ENCODE measurements at regions of chr1 and their contacts with region 1.

Region 1: DNA sequence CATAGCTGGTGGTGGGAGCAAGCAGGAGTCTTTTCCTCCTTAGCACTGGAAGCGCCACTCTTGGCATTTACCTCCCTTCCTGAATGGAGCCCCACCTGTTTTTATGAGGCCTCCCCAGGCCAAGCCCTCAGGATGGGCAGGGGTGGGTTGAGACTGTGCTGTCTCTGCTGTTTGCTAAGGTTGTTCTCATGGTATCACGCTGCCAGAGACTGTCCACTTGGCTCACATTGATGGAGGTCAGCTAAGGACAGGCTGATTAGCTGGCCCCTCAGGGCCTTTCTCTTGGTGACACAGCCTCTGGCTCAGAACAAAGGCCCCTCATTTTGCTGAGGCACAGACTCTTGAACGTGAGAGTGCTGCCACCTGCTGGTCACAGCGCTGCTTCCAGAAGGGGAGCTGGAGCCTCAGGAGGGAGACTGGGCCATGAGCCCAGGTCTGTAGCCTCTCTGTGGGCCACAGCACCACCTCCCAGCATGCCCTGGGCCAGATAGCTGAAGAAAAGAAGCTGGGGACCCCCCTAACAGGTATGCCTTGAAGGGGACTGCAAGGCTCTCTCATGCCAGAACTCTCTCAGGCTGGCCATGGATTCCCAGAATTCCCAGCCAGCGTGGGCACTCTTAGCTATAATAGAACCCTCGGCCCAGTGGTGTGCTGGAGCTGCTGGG is 85.6 kb downstream of the CD58 start:
- DNase-seq: peak; percentile 85
- H3K4me3 ChIP-seq: peak overlapping the region in 1 of 2 experiments; percentile 33; a peak in 1 of 4 replicates
- H3K27ac ChIP-seq: peak overlapping the region in 1 of 2 experiments; percentile 58; a peak in 2 of 4 replicates
- H3K4me1 ChIP-seq: peaks cover 15 to 48% of the 10 kb centered on the region in 2 experiments; a peak in 3 of 4 replicates
- H3K27me3 ChIP-seq: no peaks in the 10 kb centered on the region
- CTCF ChIP-seq: peak; percentile 92
- EP300 ChIP-seq: no peak
- RAD21 ChIP-seq: peak; percentile 96

Region 2: DNA sequence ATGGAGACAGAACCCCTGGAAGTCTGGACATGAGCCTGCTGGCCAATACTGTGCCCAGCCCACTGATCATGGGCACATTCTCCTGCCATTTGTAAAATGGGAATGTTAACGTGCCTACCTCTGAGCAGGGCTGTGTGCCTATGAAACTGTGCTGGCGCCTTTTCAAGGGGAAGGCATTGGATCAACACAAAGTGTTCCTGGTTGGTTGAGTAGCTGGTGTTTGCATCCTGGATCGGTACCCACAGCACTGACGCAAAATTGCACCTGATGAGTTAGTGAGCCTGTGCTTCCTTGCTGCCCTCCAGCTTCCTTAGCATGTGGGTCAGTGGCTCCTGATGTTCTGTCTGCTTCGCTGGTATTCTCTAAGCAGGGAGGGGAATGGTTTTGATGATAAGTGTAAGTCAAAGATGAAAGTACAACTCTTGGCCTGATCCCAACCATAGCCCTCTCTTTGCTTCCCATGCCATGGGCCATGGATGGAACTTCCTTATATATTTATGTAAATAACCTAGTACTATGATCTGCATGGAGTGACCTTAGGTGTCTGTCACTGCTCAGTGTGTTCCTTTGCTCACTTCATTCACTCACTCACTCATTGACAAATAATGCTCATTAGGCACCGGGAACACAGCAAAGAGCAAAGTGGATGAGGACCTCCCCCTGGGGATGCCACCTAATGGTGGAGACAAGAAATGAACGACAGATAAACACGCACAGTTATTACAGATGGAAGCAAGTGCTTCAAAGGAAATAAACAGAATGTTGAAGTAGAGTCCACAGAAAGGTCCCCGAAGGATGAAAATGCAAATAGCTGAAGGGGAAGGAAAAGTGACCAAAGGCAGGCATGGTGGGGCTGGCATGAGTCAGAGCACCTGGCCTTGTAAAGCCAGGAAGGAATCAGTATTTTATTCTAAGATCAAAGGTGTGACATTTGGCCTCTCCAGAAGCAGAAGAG is 351.2 kb before region 1 on chr1:
- CTCF ChIA-PET with region 1: interaction called, 1,099 read pairs
- POLR2A ChIA-PET with region 1: interaction called, 29 read pairs
- DNase-seq: no peak
- H3K4me3 ChIP-seq: no peak overlapping the region
- H3K27ac ChIP-seq: no peak overlapping the region
- H3K4me1 ChIP-seq: no peaks in the 10 kb centered on the region
- H3K27me3 ChIP-seq: peaks cover 4% of the 10 kb centered on the region; the same call in 1 of the 2 replicates
- CTCF ChIP-seq: no peak
- EP300 ChIP-seq: no peak
- RAD21 ChIP-seq: no peak

Region 3: DNA sequence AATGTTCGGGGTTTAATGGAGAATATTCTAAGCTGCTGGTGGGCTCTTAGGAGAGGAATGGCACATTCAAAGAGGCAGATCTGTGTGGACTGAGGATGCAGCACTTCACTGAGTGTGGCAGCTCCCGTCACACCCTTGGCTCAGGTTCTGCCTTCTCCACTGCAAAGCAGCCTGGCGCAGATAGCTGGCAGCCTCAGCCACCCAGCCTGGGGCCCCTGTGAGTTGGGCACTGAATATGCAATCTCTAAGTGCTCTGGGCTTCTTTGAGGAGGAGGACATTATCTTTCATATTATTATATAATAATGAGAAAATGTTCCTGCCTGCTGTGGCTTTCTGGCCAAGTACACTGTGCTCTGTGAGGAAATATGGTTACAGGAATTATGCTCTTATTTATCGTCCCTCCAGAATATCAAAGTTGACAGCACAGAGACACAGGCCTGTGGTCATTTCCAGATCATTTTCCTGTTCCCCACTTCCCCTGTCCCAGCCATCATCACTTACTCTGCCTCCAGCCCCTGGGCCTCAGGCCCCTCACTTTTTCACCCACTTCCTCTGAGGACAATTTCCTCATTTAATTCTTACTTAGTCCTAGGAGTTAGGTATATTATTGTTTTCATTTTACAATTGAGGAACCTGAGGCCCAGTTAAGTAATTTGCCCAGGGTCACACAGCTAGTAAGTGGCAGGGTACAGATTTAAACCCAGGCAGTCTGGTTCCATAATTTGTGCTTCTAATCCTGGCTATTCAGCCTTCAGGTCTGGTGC is 320.4 kb before region 1 on chr1:
- CTCF ChIA-PET with region 1: interaction called, 16 read pairs
- POLR2A ChIA-PET with region 1: no interaction called
- DNase-seq: peak; percentile 55
- H3K4me3 ChIP-seq: no peak overlapping the region
- H3K27ac ChIP-seq: peak overlapping the region in 1 of 2 experiments; percentile 69; a peak in 2 of 4 replicates
- H3K4me1 ChIP-seq: peaks cover 0 to 26% of the 10 kb centered on the region in 2 experiments; a peak in 1 of 4 replicates
- H3K27me3 ChIP-seq: no peaks in the 10 kb centered on the region
- CTCF ChIP-seq: no peak
- EP300 ChIP-seq: no peak
- RAD21 ChIP-seq: no peak

Region 4: DNA sequence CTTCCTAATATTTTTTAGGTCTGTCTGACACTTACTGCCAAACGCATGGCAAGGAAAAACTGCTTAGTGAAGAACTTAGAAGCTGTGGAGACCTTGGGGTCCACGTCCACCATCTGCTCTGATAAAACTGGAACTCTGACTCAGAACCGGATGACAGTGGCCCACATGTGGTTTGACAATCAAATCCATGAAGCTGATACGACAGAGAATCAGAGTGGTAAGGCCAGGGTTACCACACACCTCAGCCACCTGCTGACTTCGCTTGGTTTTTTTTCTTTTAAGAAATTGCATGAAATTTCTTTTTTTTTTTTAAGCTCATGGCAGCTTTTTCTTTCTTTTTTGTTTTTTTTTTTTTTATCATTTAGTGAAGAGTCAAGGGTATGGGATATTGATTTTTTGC is 95.0 kb before region 1 on chr1:
- CTCF ChIA-PET with region 1: interaction called, 11 read pairs
- POLR2A ChIA-PET with region 1: no interaction called
- DNase-seq: no peak
- H3K4me3 ChIP-seq: no peak overlapping the region
- H3K27ac ChIP-seq: no peak overlapping the region
- H3K4me1 ChIP-seq: no peaks in the 10 kb centered on the region; a peak in 1 of 4 replicates
- H3K27me3 ChIP-seq: no peaks in the 10 kb centered on the region
- CTCF ChIP-seq: no peak
- EP300 ChIP-seq: no peak
- RAD21 ChIP-seq: no peak

Region 5: GRCh38 chr1:116460261-116460660 is 24.9 kb before region 1 on chr1:
- CTCF ChIA-PET with region 1: interaction called, 16 read pairs
- POLR2A ChIA-PET with region 1: no interaction called
- DNase-seq: no peak
- H3K4me3 ChIP-seq: no peak overlapping the region
- H3K27ac ChIP-seq: no peak overlapping the region
- H3K4me1 ChIP-seq: no peaks in the 10 kb centered on the region; a peak in 2 of 4 replicates
- H3K27me3 ChIP-seq: no peaks in the 10 kb centered on the region
- CTCF ChIP-seq: no peak
- EP300 ChIP-seq: no peak
- RAD21 ChIP-seq: no peak

Region 6: DNA sequence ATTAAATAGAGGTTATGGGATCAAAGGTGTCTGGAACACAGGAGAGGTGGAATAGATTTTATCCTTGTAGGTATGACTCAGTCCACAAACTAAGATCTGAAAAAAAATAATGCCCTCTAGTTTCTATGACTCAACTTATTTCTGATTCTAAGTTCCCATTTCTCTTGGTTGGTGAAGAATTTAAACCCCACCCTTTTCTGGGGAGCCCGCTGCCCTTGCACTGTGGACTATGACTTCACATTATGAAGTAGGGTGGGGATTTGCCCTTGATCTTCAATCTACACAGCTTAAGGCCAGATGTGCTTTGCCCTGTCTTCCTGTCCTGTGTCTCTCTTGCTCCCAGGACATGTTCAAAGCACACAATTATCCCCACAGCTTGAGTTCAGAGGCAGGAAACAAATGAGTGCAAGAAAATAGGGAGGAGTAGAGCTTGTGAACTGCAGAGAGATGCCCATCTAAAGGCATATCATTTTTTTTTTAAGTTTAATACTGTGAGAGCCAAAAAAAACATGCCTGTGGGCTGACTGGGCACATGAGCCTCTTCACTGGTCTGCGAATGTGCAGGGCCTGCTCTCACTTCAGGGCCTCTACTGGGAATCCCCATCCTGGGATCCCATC is 23.9 kb after region 1 on chr1:
- CTCF ChIA-PET with region 1: interaction called, 237 read pairs
- POLR2A ChIA-PET with region 1: no interaction called
- DNase-seq: no peak
- H3K4me3 ChIP-seq: no peak overlapping the region
- H3K27ac ChIP-seq: peak overlapping the region; percentile 29 to 97; a peak in 3 of 4 replicates
- H3K4me1 ChIP-seq: peaks cover 23% of the 10 kb centered on the region in 2 experiments; a peak in 3 of 4 replicates
- H3K27me3 ChIP-seq: no peaks in the 10 kb centered on the region
- CTCF ChIP-seq: no peak
- EP300 ChIP-seq: peak in 1 of 2 experiments; percentile 59; a peak in 1 of 4 replicates
- RAD21 ChIP-seq: no peak

Region 7: GRCh38 chr1:116624040-116624439 is 138.8 kb after region 1 on chr1:
- CTCF ChIA-PET with region 1: no interaction called
- POLR2A ChIA-PET with region 1: no interaction called
- DNase-seq: no peak
- H3K4me3 ChIP-seq: no peak overlapping the region
- H3K27ac ChIP-seq: no peak overlapping the region
- H3K4me1 ChIP-seq: peaks cover 0 to 32% of the 10 kb centered on the region in 2 experiments; a peak in 1 of 4 replicates
- H3K27me3 ChIP-seq: no peaks in the 10 kb centered on the region
- CTCF ChIP-seq: no peak
- EP300 ChIP-seq: no peak
- RAD21 ChIP-seq: no peak

Region 8: GRCh38 chr1:116654355-116654754 is 169.2 kb after region 1 on chr1:
- CTCF ChIA-PET with region 1: no interaction called
- POLR2A ChIA-PET with region 1: no interaction called
- DNase-seq: no peak
- H3K4me3 ChIP-seq: no peak overlapping the region
- H3K27ac ChIP-seq: no peak overlapping the region
- H3K4me1 ChIP-seq: peaks cover 0 to 18% of the 10 kb centered on the region in 2 experiments; a peak in 2 of 4 replicates
- H3K27me3 ChIP-seq: no peaks in the 10 kb centered on the region
- CTCF ChIP-seq: no peak
- EP300 ChIP-seq: no peak
- RAD21 ChIP-seq: no peak